Esophagus muscularis mucosa (tissue), 4 donors: ENCODE measurements at regions of chr9 and their contacts with region 1.

Region 1: GRCh38 chr9:72022841-72023240 is 37.6 kb downstream of the C9orf57 start:
- DNase-seq: no peak
- H3K4me3 ChIP-seq: no peak overlapping the region
- H3K27ac ChIP-seq: no peak overlapping the region
- H3K4me1 ChIP-seq: no peaks in the 10 kb centered on the region
- H3K27me3 ChIP-seq: no peaks in the 10 kb centered on the region
- CTCF ChIP-seq: no peak
- EP300 ChIP-seq: no peak
- POLR2A ChIP-seq: no peak

Region 2: GRCh38 chr9:71285191-71285656 is 737.6 kb before region 1 on chr9:
- intact Hi-C with region 1: loop called (anchors 10 kb)
- DNase-seq: no peak
- H3K4me3 ChIP-seq: no peak overlapping the region
- H3K27ac ChIP-seq: no peak overlapping the region
- H3K4me1 ChIP-seq: no peaks in the 10 kb centered on the region
- H3K27me3 ChIP-seq: no peaks in the 10 kb centered on the region
- CTCF ChIP-seq: peak; percentile 59 to 83 (median 74)
- EP300 ChIP-seq: no peak
- POLR2A ChIP-seq: no peak

Region 3: GRCh38 chr9:71806901-71807307 is 215.9 kb before region 1 on chr9:
- intact Hi-C with region 1: loop called (anchors 2 kb)
- DNase-seq: no peak
- H3K4me3 ChIP-seq: no peak overlapping the region
- H3K27ac ChIP-seq: no peak overlapping the region
- H3K4me1 ChIP-seq: peaks cover 0 to 7% (median 0%) of the 10 kb centered on the region in 4 donors
- H3K27me3 ChIP-seq: no peaks in the 10 kb centered on the region
- CTCF ChIP-seq: peak; percentile 82 to 94 (median 86)
- EP300 ChIP-seq: no peak
- POLR2A ChIP-seq: no peak